Activated CD8-positive, alpha-beta memory T cell treated with anti-CD3 and anti-CD28 coated beads, Interleukin-2, amount 10 ng/mL, durations not matched to agents 7 days and 5 days (primary cell): ENCODE measurements at regions of chr6 and their contacts with region 1.

Region 1: GRCh38 chr6:90478789-90479602 is 107.9 kb downstream of the MAP3K7 start:
- DNase-seq: peak; percentile 88
- ATAC-seq: peak; percentile 96
- H3K4me3 Mint-ChIP-seq: no peak overlapping the region
- H3K27ac Mint-ChIP-seq: peak overlapping the region; percentile 74
- H3K4me1 Mint-ChIP-seq: peaks cover 52% of the 10 kb centered on the region
- H3K27me3 Mint-ChIP-seq: peaks cover 6% of the 10 kb centered on the region

Region 2: DNA sequence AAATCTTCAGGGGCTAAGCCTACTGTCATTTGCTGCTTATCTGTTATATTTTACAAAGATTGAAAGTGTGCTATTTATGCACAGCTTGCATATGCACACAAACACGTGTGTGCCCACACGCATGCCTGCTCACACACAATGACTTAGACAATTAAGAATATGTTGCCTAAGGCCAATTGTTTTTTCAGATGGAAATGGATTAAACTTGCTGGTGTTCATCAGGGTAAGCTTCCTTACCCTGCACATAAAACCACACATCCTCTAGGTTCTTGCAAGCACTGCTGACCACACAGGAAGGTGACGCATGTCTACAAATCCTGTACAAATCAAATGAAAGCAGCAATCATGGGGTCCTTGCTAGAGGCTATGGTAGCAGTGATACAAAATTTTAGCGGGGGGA is 526.3 kb before region 1 on chr6:
- CTCF ChIA-PET with region 1: interaction called, 14 read pairs
- DNase-seq: peak; percentile 88
- ATAC-seq: peak; percentile 87
- H3K4me3 Mint-ChIP-seq: peak overlapping the region; percentile 53
- H3K27ac Mint-ChIP-seq: peak overlapping the region; percentile 87
- H3K4me1 Mint-ChIP-seq: peaks cover 63% of the 10 kb centered on the region
- H3K27me3 Mint-ChIP-seq: no peaks in the 10 kb centered on the region

Region 3: GRCh38 chr6:90370493-90370959 is 108.5 kb before region 1 on chr6:
- CTCF ChIA-PET with region 1: interaction called, 10 read pairs
- DNase-seq: no peak
- ATAC-seq: peak; percentile 50
- H3K4me3 Mint-ChIP-seq: no peak overlapping the region
- H3K27ac Mint-ChIP-seq: peak overlapping the region; percentile 59
- H3K4me1 Mint-ChIP-seq: peaks cover 35% of the 10 kb centered on the region
- H3K27me3 Mint-ChIP-seq: peaks cover 7% of the 10 kb centered on the region

Region 4: GRCh38 chr6:90413867-90414266 is 65.1 kb before region 1 on chr6:
- CTCF ChIA-PET with region 1: interaction called, 66 read pairs
- DNase-seq: peak; percentile 93
- ATAC-seq: peak; percentile 85
- H3K4me3 Mint-ChIP-seq: peak overlapping the region; percentile 72
- H3K27ac Mint-ChIP-seq: peak overlapping the region; percentile 97
- H3K4me1 Mint-ChIP-seq: peaks cover 83% of the 10 kb centered on the region
- H3K27me3 Mint-ChIP-seq: peaks cover 3% of the 10 kb centered on the region

Region 5: DNA sequence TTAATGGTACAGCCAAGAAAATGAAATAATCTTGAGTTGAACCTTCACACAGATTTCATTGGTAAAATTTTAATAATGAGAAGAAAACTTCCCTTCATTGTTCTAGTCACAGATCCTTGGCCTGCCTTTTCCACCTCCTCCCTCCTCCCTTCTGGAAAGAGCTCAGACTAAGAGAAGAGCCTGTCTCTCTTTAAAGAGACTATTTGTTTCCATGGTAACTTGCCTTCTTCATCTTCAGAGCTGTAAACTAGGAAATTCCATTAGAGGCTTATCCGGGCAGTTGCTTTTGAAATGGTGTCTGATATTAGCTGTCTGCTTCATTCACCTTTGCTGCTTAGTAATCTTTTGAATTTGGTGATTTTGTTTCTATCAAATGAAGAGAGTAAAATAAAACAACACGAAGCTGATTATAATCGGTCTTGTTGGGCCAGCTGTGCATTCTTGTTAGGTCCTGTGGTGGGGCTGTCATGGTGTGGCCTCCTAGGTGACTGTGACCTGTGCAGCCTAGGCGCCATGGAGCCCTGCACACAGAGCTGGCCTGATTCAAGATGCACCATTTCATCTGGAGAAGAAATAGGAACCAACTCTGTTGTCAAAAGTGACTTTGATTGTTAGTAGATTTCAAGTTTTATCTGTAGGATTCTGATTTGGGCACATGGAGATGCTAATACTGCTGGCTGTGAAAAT is 11.2 kb after region 1 on chr6:
- CTCF ChIA-PET with region 1: interaction called, 31 read pairs
- DNase-seq: no peak
- ATAC-seq: no peak
- H3K4me3 Mint-ChIP-seq: no peak overlapping the region
- H3K27ac Mint-ChIP-seq: no peak overlapping the region
- H3K4me1 Mint-ChIP-seq: peaks cover 7% of the 10 kb centered on the region
- H3K27me3 Mint-ChIP-seq: peaks cover 31% of the 10 kb centered on the region

Region 6: GRCh38 chr6:90559931-90560330 is 80.9 kb after region 1 on chr6:
- CTCF ChIA-PET with region 1: no interaction called
- DNase-seq: no peak
- ATAC-seq: no peak
- H3K4me3 Mint-ChIP-seq: no peak overlapping the region
- H3K27ac Mint-ChIP-seq: no peak overlapping the region
- H3K4me1 Mint-ChIP-seq: peaks cover 14% of the 10 kb centered on the region
- H3K27me3 Mint-ChIP-seq: no peaks in the 10 kb centered on the region

Region 7: DNA sequence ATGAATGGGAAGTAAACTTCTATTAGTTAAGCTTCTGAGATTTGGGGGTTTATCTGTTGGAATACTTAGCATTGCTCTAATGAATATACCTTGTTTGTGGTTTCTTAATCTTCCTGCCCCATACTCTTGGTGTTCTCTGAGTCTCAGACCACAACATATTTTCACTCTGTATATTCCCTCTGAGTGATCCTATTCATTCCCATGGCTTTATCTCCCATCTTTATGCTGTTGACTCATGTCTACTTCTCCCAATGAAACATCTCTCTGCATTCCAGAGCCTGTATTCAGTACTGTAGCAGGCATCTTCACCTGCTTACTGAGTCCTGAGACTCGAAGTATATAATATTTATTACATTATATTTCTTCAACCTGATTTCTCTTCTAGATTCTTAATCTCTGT is 391.6 kb after region 1 on chr6:
- CTCF ChIA-PET with region 1: no interaction called
- DNase-seq: no peak
- ATAC-seq: no peak
- H3K4me3 Mint-ChIP-seq: no peak overlapping the region
- H3K27ac Mint-ChIP-seq: no peak overlapping the region
- H3K4me1 Mint-ChIP-seq: no peaks in the 10 kb centered on the region
- H3K27me3 Mint-ChIP-seq: peaks cover 12% of the 10 kb centered on the region